Activated T-helper 2 cell treated with anti-CD3 and anti-CD28 coated beads, Interferon-gamma antibody, Interleukin-2, Interleukin-4, amounts not matched to agents 10 μg/mL and 5 μg/mL and 100 μg/mL, durations not matched to agents 14 hours and 24 hours and 36 hours (primary cell): ENCODE measurements at regions of chr22 and their contacts with region 1.

Region 1: GRCh38 chr22:36454916-36455570 is 26.4 kb downstream of the TXN2 start:
- DNase-seq: peak; percentile 95
- H3K4me3 Mint-ChIP-seq: peak overlapping the region; percentile 69
- H3K27ac Mint-ChIP-seq: peak overlapping the region; percentile 60
- H3K4me1 Mint-ChIP-seq: peaks cover 35% of the 10 kb centered on the region
- H3K27me3 Mint-ChIP-seq: no peaks in the 10 kb centered on the region

Region 2: GRCh38 chr22:36409911-36410756 is 44.9 kb before region 1 on chr22:
- intact Hi-C with region 1: loop called (anchors 5 kb)
- DNase-seq: peak; percentile 55
- H3K4me3 Mint-ChIP-seq: peak overlapping the region; percentile 52
- H3K27ac Mint-ChIP-seq: peak overlapping the region; percentile 46
- H3K4me1 Mint-ChIP-seq: peaks cover 34% of the 10 kb centered on the region
- H3K27me3 Mint-ChIP-seq: no peaks in the 10 kb centered on the region

Region 3: GRCh38 chr22:36419912-36420761 is 34.9 kb before region 1 on chr22:
- intact Hi-C with region 1: no loop called
- DNase-seq: no peak
- H3K4me3 Mint-ChIP-seq: no peak overlapping the region
- H3K27ac Mint-ChIP-seq: peak overlapping the region; percentile 63
- H3K4me1 Mint-ChIP-seq: peaks cover 18% of the 10 kb centered on the region
- H3K27me3 Mint-ChIP-seq: no peaks in the 10 kb centered on the region

Region 4: DNA sequence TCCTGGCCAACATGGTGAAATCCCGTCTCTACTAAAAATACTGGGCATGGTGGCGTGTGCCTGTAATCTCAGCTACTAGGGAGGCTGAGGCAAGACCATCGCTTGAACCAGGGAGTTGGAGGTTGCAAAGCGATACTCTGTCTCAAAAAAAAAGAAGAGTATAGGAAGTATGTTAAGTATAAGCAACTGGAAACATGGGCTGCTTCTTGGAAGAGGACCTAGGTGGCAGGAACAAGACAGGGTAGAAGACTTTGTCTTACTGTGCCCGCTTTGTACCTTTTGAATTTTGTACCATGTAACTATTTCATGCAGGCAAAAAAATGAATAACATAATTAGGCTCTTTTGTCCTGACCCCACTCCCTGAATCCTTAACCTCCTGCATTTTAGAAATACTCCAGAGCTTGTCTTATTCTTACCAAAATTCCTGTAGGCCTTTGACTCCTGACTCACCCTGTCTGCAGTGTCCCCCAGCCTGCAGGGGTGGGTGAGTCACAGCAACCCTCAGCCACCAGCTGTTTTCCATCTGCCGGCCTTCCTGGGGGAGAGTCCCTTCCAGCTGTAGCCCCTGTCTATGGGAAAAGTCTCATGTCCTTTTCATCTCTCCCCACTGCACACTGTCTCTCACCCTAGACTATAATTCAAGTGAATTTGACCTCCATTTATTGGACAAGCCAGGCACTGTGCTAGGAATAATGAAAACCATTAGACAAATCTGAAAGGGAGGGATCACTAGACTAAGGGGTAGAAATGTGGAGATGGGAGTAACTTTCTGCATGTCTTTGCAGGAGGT is 15.4 kb before region 1 on chr22:
- intact Hi-C with region 1: loop called (anchors 1 kb)
- DNase-seq: no peak
- H3K4me3 Mint-ChIP-seq: no peak overlapping the region
- H3K27ac Mint-ChIP-seq: peak overlapping the region; percentile 4
- H3K4me1 Mint-ChIP-seq: peaks cover 33% of the 10 kb centered on the region
- H3K27me3 Mint-ChIP-seq: no peaks in the 10 kb centered on the region

Region 5: GRCh38 chr22:36884349-36885117 is 429.5 kb after region 1 on chr22:
- intact Hi-C with region 1: no loop called
- DNase-seq: no peak
- H3K4me3 Mint-ChIP-seq: no peak overlapping the region
- H3K27ac Mint-ChIP-seq: peak overlapping the region; percentile 60
- H3K4me1 Mint-ChIP-seq: peaks cover 26% of the 10 kb centered on the region
- H3K27me3 Mint-ChIP-seq: peaks cover 2% of the 10 kb centered on the region